ENCODE measurements at regions of chr1 and their contacts with region 1.

Region 1: GRCh38 chr1:26602378-26602959 is 72.9 kb downstream of the RPS6KA1 start:
- DNase-seq: peak in 18 of 35 experiments; percentile 5 to 83 (median 22)
- ATAC-seq: peak in 2 of 4 experiments; percentile 48 to 55
- H3K4me3 ChIP-seq: no peak overlapping the region
- H3K4me3 Mint-ChIP-seq: no peak overlapping the region
- H3K27ac ChIP-seq: no peak overlapping the region
- H3K27ac Mint-ChIP-seq: no peak overlapping the region
- H3K4me1 ChIP-seq: peaks cover 0 to 5% of the 10 kb centered on the region in 2 experiments
- H3K4me1 Mint-ChIP-seq: peaks cover 4 to 9% (median 8%) of the 10 kb centered on the region in 3 donors
- H3K27me3 ChIP-seq: peaks cover 0 to 2% of the 10 kb centered on the region in 2 experiments
- H3K27me3 Mint-ChIP-seq: peaks cover 0 to 1% of the 10 kb centered on the region in 2 donors

Region 2: GRCh38 chr1:26408604-26409003 is 193.9 kb before region 1 on chr1:
- CTCF ChIA-PET with region 1: no interaction called
- POLR2A ChIA-PET with region 1: no interaction called
- DNase-seq: peak; percentile 38 to 89 (median 71)
- ATAC-seq: peak; percentile 80 to 89 (median 85)
- H3K4me3 ChIP-seq: peak overlapping the region in 1 of 2 donors; percentile 54
- H3K4me3 Mint-ChIP-seq: peak overlapping the region in 2 of 3 donors; percentile 41 to 72
- H3K27ac ChIP-seq: no peak overlapping the region
- H3K27ac Mint-ChIP-seq: no peak overlapping the region
- H3K4me1 ChIP-seq: peaks cover 15 to 35% of the 10 kb centered on the region in 2 experiments
- H3K4me1 Mint-ChIP-seq: peaks cover 26 to 37% (median 27%) of the 10 kb centered on the region in 3 donors
- H3K27me3 ChIP-seq: peaks cover 4 to 69% of the 10 kb centered on the region in 2 experiments
- H3K27me3 Mint-ChIP-seq: peaks cover 41 to 57% of the 10 kb centered on the region in 2 donors

Region 3: GRCh38 chr1:26524181-26524580 is 78.3 kb before region 1 on chr1:
- CTCF ChIA-PET with region 1: no interaction called
- POLR2A ChIA-PET with region 1: interaction called in 1 of 2 experiments, 14 read pairs
- DNase-seq: no peak
- ATAC-seq: no peak
- H3K4me3 ChIP-seq: no peak overlapping the region
- H3K4me3 Mint-ChIP-seq: no peak overlapping the region
- H3K27ac ChIP-seq: no peak overlapping the region
- H3K27ac Mint-ChIP-seq: no peak overlapping the region
- H3K4me1 ChIP-seq: peaks cover 0 to 2% of the 10 kb centered on the region in 2 experiments
- H3K4me1 Mint-ChIP-seq: peaks cover 2 to 4% (median 3%) of the 10 kb centered on the region in 3 donors
- H3K27me3 ChIP-seq: peaks cover 0 to 15% of the 10 kb centered on the region in 2 experiments
- H3K27me3 Mint-ChIP-seq: peaks cover 0 to 4% of the 10 kb centered on the region in 2 donors

Region 4: DNA sequence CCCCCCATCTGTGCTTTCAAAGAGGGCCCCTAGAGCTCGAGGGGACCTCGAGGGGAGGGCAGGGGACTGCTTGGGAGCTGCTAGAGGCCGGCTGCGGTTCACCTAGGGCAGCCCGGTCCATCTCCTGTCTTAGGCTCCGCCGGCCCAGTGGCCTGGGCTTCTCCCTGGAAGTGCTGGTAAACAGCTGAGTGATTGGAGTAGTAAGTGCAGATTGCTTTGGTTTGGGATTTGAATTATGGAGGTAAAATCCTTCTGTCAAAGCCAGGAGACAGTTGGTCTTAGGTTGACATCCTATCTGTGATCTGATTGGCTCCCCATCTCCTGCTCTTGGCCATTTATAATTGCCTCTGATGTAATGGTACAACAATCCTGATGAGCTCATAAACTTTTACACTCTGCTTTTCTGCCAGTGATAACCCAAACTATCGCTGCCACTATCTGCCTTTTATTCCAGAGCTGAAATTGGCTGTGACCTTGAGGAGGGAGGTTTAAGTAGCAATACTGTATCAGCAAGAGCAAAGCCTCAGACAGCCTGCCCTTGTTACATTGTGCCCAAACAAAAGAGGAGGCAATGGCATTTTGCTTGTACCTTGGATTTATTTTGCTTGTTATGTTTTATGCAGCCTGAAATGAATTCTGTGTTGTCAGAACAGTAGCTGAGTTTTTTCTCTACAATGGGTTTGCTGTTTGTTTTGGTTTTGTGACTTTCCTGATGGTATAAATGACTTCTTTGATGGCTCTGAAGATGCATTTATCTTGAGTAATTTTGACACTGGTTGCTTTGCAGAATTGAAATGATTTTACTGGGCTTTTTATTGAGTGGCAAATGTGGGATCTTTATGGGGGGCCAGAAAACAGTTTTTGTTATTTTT is 95.7 kb after region 1 on chr1:
- CTCF ChIA-PET with region 1: interaction called, 3 to 11 read pairs
- POLR2A ChIA-PET with region 1: no interaction called
- DNase-seq: peak in 31 of 35 experiments; percentile 3 to 81 (median 31)
- ATAC-seq: peak in 3 of 4 experiments; percentile 6 to 44 (median 13)
- H3K4me3 ChIP-seq: peak overlapping the region; percentile 86 to 88
- H3K4me3 Mint-ChIP-seq: no peak overlapping the region
- H3K27ac ChIP-seq: peak overlapping the region; percentile 61
- H3K27ac Mint-ChIP-seq: no peak overlapping the region
- H3K4me1 ChIP-seq: peaks cover 44 to 61% of the 10 kb centered on the region in 2 experiments
- H3K4me1 Mint-ChIP-seq: peaks cover 18 to 20% (median 19%) of the 10 kb centered on the region in 3 donors
- H3K27me3 ChIP-seq: no peaks in the 10 kb centered on the region
- H3K27me3 Mint-ChIP-seq: no peaks in the 10 kb centered on the region